Caco-2 (cell line): ENCODE measurements at regions of chr6 and their contacts with region 1.

Region 1: GRCh38 chr6:110341663-110342596 is 16.2 kb downstream of the METTL24 start:
- DNase-seq: peak; percentile 58 to 64
- H3K4me3 ChIP-seq: no peak overlapping the region
- H3K4me3 Mint-ChIP-seq: no peak overlapping the region
- H3K27ac Mint-ChIP-seq: no peak overlapping the region
- H3K4me1 ChIP-seq: no peaks in the 10 kb centered on the region
- H3K4me1 Mint-ChIP-seq: no peaks in the 10 kb centered on the region
- H3K27me3 ChIP-seq: no peaks in the 10 kb centered on the region
- H3K27me3 Mint-ChIP-seq: no peaks in the 10 kb centered on the region
- CTCF ChIP-seq: peak; percentile 53 to 79

Region 2: GRCh38 chr6:110179401-110180227 is 162.3 kb before region 1 on chr6 and contains the start of gene WASF1:
- CTCF ChIA-PET with region 1: interaction called, 10 read pairs
- POLR2A ChIA-PET with region 1: no interaction called
- intact Hi-C with region 1: loop called (anchors 1 kb)
- DNase-seq: peak; percentile 96
- H3K4me3 ChIP-seq: peak within 1 kb of the TSS; percentile 100
- H3K4me3 Mint-ChIP-seq: no peak within 1 kb of the TSS
- H3K27ac Mint-ChIP-seq: no peak within 1 kb of the TSS
- H3K4me1 ChIP-seq: 0 out of 2 replicates have a peak, but pooled peaks cover 3% of the 10 kb centered on the region
- H3K4me1 Mint-ChIP-seq: no peaks in the 10 kb centered on the region
- H3K27me3 ChIP-seq: no peaks in the 10 kb centered on the region
- H3K27me3 Mint-ChIP-seq: no peaks in the 10 kb centered on the region
- CTCF ChIP-seq: no peak
- total RNA-seq, gene WASF1: 7.3 and 7.4 TPM in 2 replicates

Region 3: DNA sequence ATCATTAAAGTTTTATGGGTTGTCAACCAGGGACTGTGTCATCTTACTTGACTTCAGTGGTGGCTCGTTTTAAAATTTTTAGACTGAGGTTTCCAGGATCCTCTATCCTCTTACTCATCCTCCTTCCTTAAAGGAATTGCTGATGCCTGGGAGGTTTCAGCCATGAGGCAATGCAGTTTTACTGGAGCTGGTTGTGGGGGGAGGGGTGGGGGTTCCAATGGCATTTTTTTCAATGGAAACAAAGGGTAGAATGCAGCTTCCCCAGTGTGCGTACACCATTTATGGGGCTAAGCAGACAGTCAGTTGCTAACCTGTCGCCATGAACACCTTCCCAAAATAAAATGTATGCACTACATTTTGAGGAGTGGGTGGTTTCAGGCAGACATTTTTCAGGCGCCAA is 71.8 kb before region 1 on chr6:
- CTCF ChIA-PET with region 1: no interaction called
- POLR2A ChIA-PET with region 1: no interaction called
- intact Hi-C with region 1: no loop called
- DNase-seq: no peak
- H3K4me3 ChIP-seq: no peak overlapping the region
- H3K4me3 Mint-ChIP-seq: no peak overlapping the region
- H3K27ac Mint-ChIP-seq: no peak overlapping the region
- H3K4me1 ChIP-seq: no peaks in the 10 kb centered on the region
- H3K4me1 Mint-ChIP-seq: no peaks in the 10 kb centered on the region
- H3K27me3 ChIP-seq: no peaks in the 10 kb centered on the region
- H3K27me3 Mint-ChIP-seq: peaks cover 7% of the 10 kb centered on the region
- CTCF ChIP-seq: no peak

Region 4: DNA sequence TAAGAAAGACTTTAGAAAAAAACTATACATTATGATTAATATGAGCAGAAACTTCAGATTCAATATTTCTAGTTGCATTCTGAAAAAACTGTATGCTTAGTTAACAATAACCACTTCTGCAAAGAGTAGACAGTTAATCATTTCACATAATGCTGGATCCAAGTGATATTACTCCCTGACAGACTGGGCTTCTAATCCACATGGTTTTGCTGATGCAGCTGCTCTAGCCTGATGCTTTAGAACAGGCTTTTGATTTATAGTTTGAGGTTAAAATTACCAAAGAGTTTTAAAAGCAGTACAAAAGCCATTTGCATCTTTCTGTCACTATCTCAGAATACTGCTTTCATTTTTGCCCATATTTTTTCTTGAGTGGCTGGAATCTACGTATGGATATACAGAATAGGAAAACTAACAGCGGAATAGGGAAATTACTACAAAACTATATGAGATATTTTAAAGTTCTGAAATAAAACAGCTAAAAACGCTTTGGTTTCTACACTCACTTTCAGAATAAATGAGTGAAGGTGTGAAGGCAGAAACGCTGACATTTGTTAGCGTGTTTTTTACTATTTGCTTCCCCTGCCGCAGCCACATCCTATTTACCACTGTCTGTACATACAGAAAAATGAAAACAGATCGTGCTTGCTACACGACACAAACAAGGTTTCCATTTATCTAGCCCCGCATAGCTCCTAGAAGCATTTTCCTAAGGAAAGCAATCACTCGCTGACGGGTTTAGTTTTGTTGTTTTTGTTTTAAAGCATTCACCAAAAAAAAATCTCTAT is 45.5 kb before region 1 on chr6:
- CTCF ChIA-PET with region 1: no interaction called
- POLR2A ChIA-PET with region 1: no interaction called
- intact Hi-C with region 1: loop called (anchors 5 kb)
- DNase-seq: no peak
- H3K4me3 ChIP-seq: no peak overlapping the region
- H3K4me3 Mint-ChIP-seq: no peak overlapping the region
- H3K27ac Mint-ChIP-seq: no peak overlapping the region
- H3K4me1 ChIP-seq: no peaks in the 10 kb centered on the region
- H3K4me1 Mint-ChIP-seq: no peaks in the 10 kb centered on the region
- H3K27me3 ChIP-seq: no peaks in the 10 kb centered on the region
- H3K27me3 Mint-ChIP-seq: peaks cover 19% of the 10 kb centered on the region
- CTCF ChIP-seq: no peak